HepG2 (cell line): ENCODE measurements at regions of chr6 and their contacts with region 1.

Region 1: DNA sequence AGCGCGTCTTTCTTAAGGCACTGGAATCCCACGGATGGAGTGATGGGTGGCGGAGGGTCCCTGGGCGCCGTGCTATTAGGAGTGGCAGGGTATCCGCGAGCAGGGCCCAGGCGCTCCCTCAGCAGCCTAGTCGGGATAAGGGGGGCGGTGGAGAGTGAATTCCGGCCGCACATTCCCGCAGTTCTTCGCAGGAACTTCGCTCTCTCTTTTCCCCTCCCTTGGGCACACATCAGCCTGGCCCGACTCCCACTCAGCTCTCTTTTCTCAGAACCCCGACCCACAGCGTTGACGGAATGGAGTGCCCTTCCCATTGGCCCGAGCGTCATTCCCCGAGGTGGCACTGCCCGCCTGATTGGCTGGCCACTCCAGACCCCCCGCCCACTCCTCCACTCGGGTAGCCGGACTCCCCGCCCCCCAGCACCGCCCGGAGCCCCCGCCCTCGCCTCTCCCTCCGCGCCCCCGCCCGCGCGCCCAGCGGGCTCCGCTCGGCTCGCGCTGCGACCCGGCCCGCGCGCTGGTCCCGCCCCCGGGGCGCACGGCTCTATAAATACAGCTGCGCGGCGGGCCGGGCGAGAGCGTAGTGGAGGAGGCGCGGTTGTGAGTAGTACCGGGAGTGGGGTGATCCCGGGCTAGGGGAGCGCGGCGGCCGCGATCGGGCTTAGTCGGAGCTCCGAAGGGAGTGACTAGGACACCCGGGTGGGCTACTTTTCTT is at the start of gene ID4:
- DNase-seq: no peak
- ATAC-seq: no peak
- H3K4me3 ChIP-seq: peak within 1 kb of the TSS; percentile 88 to 94 (median 89)
- H3K27ac ChIP-seq: peak within 1 kb of the TSS; percentile 79
- H3K4me1 ChIP-seq: peaks cover 55% of the 10 kb centered on the region
- H3K27me3 ChIP-seq: no peaks in the 10 kb centered on the region; a peak in 1 of 5 replicates
- CTCF ChIP-seq: no peak
- EP300 ChIP-seq: no peak
- POLR2A ChIP-seq: no peak
- RAD21 ChIP-seq: no peak
- total RNA-seq, gene ID4: 0.44 and 0.60 TPM in 2 replicates

Region 2: GRCh38 chr6:18264219-18264922 is 1572.6 kb before region 1 on chr6 and contains the start of gene DEK:
- CTCF ChIA-PET with region 1: no interaction called
- POLR2A ChIA-PET with region 1: no interaction called
- in situ Hi-C with region 1: loop called (anchors 25 kb)
- intact Hi-C with region 1: no loop called
- DNase-seq: peak; percentile 84
- ATAC-seq: peak; percentile 88
- H3K4me3 ChIP-seq: peak within 1 kb of the TSS; percentile 80 to 95 (median 90)
- H3K27ac ChIP-seq: peak within 1 kb of the TSS; percentile 92
- H3K4me1 ChIP-seq: peaks cover 84% of the 10 kb centered on the region
- H3K27me3 ChIP-seq: no peaks in the 10 kb centered on the region; a peak in 1 of 5 replicates
- CTCF ChIP-seq: peak; percentile 75
- EP300 ChIP-seq: no peak
- POLR2A ChIP-seq: peak; percentile 45 to 72
- RAD21 ChIP-seq: peak; percentile 27; the same call in 1 of the 2 replicates
- total RNA-seq, gene DEK: 276 and 337 TPM in 2 replicates

Region 3: GRCh38 chr6:19697744-19698290 is 139.1 kb before region 1 on chr6:
- CTCF ChIA-PET with region 1: no interaction called
- POLR2A ChIA-PET with region 1: no interaction called
- in situ Hi-C with region 1: no loop called
- intact Hi-C with region 1: no loop called
- DNase-seq: no peak
- ATAC-seq: no peak
- H3K4me3 ChIP-seq: no peak overlapping the region
- H3K27ac ChIP-seq: no peak overlapping the region
- H3K4me1 ChIP-seq: no peaks in the 10 kb centered on the region
- H3K27me3 ChIP-seq: 0 out of 5 replicates have a peak, but pooled peaks cover 0 to 4% of the 10 kb centered on the region in 2 experiments
- CTCF ChIP-seq: no peak
- EP300 ChIP-seq: no peak
- POLR2A ChIP-seq: no peak
- RAD21 ChIP-seq: no peak

Region 4: DNA sequence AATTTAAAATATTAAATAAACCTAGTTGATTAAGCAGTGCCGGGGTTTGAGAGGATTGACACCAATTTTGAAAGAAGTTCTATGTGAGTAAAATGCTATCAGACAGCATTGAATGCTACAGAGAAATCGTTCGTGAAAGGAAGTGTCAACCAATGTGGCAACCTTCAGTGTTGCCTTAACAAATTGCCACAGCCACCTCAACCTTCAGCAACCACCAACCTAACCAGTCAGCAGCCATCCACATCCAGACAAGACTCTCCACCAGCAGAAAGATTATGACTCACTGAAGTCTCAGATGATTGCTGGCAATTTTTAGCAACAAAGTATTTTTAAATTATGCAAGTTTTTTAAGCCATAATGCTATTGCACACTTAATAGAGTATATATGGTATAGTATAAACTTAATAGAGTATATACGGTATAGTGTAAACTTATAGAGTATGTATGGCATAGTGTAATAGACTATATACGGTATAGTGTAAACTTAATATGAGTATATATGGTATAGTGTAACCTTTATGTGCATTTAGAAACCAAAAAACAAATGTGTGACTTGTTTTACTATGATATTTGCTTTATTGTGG is 65.1 kb before region 1 on chr6:
- CTCF ChIA-PET with region 1: no interaction called
- POLR2A ChIA-PET with region 1: no interaction called
- in situ Hi-C with region 1: no loop called
- intact Hi-C with region 1: no loop called
- DNase-seq: no peak
- ATAC-seq: no peak
- H3K4me3 ChIP-seq: no peak overlapping the region
- H3K27ac ChIP-seq: no peak overlapping the region
- H3K4me1 ChIP-seq: no peaks in the 10 kb centered on the region
- H3K27me3 ChIP-seq: no peaks in the 10 kb centered on the region
- CTCF ChIP-seq: no peak
- EP300 ChIP-seq: no peak
- POLR2A ChIP-seq: no peak
- RAD21 ChIP-seq: no peak

Region 5: GRCh38 chr6:19804205-19805123 is 32.5 kb before region 1 on chr6:
- CTCF ChIA-PET with region 1: no interaction called
- POLR2A ChIA-PET with region 1: interaction called, 4 read pairs
- in situ Hi-C with region 1: no loop called
- intact Hi-C with region 1: loop called (anchors 1 kb)
- DNase-seq: peak; percentile 95
- ATAC-seq: peak; percentile 98
- H3K4me3 ChIP-seq: peak overlapping the region; percentile 62 to 82 (median 77)
- H3K27ac ChIP-seq: peak overlapping the region; percentile 84
- H3K4me1 ChIP-seq: peaks cover 34% of the 10 kb centered on the region
- H3K27me3 ChIP-seq: no peaks in the 10 kb centered on the region
- CTCF ChIP-seq: 0 out of 2 replicates have a peak, but pooled peaks have one; percentile 13
- EP300 ChIP-seq: peak; percentile 91 to 99
- POLR2A ChIP-seq: peak; percentile 76 to 80
- RAD21 ChIP-seq: peak; percentile 78

Region 6: DNA sequence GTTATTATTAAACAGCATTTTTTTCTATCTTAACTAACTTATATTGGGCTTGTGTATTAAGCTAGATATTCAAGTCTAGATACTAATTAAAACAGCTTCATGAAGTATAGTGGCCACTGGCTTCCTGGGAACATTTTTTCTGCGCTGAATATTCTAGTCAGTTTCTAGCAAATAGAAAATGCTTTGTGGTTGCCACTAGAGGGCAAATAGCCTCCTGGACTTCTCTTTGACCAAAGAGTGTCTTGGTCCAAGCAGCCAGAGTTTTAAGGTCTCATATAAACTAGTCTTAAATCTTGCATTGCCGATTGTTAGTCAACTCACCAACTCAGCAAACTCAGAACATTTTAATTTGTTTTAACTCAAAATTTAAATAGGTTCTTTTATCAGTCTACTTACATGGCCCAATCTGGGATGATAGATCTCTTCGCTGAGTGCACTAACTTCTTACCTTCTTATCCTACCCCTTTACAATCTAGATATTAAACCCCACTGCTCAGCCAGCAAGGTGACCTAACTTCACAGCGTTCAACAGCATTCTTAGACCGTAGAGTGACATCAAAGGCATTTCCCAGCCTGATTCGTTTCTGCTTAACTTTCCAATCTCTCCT is 24.3 kb before region 1 on chr6:
- CTCF ChIA-PET with region 1: no interaction called
- POLR2A ChIA-PET with region 1: no interaction called
- in situ Hi-C with region 1: no loop called
- intact Hi-C with region 1: loop called (anchors 1 kb)
- DNase-seq: peak; percentile 67
- ATAC-seq: peak; percentile 82
- H3K4me3 ChIP-seq: 0 out of 6 replicates have a peak overlapping the region, but pooled peaks of 1 of the 3 experiments have one; percentile 59
- H3K27ac ChIP-seq: no peak overlapping the region
- H3K4me1 ChIP-seq: peaks cover 26% of the 10 kb centered on the region
- H3K27me3 ChIP-seq: no peaks in the 10 kb centered on the region
- CTCF ChIP-seq: peak; percentile 67
- EP300 ChIP-seq: no peak
- POLR2A ChIP-seq: no peak
- RAD21 ChIP-seq: peak; percentile 44; the same call in 1 of the 2 replicates